Right lobe of liver (tissue), 6 donors: ENCODE measurements at regions of chr3 and their contacts with region 1.

Region 1: DNA sequence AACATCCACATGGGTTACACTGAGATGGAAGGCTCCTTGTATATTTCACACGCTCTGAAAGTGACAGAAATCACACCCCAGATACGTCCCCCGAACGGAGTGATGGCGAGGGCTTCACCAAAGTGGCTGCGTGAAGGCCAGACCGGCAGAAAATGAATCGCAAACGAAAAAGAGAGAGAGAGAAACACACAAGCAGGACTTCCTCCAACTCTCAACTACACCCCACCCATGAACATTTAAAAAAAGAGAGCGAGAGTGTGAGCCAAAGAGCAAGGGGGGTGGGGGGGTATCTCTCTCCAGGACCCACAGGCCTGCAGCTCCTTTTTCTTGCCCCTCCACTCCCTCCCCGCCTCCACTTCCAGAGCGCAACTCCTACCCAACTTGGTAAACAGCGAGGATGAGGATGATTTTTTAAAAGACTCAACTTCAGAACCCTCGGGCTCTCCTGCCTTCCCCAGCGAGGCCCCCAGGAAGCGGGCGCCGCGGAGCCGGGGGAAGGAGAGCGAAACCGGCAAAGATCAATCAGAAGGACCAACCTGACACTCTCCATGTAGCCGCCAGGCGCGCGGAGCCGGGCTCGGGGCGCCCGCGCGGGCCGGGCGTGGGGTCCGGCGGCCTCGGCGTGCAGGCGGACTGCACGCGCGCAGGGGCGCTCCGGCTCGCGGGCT is 519.1 kb downstream of the FOXP1 start:
- DNase-seq: peak in 2 of 3 donors; percentile 51 to 64
- ATAC-seq: peak; percentile 33 to 58 (median 46)
- H3K4me3 ChIP-seq: peak overlapping the region; percentile 53 to 62 (median 57)
- H3K27ac ChIP-seq: peak overlapping the region; percentile 87 to 91 (median 89)
- H3K4me1 ChIP-seq: peaks cover 0 to 57% (median 6%) of the 10 kb centered on the region in 4 donors
- H3K27me3 ChIP-seq: no peaks in the 10 kb centered on the region
- CTCF ChIP-seq: no peak
- POLR2A ChIP-seq: no peak

Region 2: GRCh38 chr3:71006810-71007785 is 57.3 kb before region 1 on chr3:
- intact Hi-C with region 1: loop called in 1 of 2 experiments (anchors 10 kb)
- DNase-seq: no peak
- ATAC-seq: peak; percentile 80 to 91 (median 86)
- H3K4me3 ChIP-seq: no peak overlapping the region
- H3K27ac ChIP-seq: peak overlapping the region in 2 of 3 donors; percentile 0 to 27
- H3K4me1 ChIP-seq: peaks cover 0 to 21% (median 7%) of the 10 kb centered on the region in 4 donors
- H3K27me3 ChIP-seq: no peaks in the 10 kb centered on the region
- CTCF ChIP-seq: peak; percentile 42 to 56 (median 52)
- POLR2A ChIP-seq: no peak